ENCODE measurements at regions of chr12 and their contacts with region 1.

Region 1: DNA sequence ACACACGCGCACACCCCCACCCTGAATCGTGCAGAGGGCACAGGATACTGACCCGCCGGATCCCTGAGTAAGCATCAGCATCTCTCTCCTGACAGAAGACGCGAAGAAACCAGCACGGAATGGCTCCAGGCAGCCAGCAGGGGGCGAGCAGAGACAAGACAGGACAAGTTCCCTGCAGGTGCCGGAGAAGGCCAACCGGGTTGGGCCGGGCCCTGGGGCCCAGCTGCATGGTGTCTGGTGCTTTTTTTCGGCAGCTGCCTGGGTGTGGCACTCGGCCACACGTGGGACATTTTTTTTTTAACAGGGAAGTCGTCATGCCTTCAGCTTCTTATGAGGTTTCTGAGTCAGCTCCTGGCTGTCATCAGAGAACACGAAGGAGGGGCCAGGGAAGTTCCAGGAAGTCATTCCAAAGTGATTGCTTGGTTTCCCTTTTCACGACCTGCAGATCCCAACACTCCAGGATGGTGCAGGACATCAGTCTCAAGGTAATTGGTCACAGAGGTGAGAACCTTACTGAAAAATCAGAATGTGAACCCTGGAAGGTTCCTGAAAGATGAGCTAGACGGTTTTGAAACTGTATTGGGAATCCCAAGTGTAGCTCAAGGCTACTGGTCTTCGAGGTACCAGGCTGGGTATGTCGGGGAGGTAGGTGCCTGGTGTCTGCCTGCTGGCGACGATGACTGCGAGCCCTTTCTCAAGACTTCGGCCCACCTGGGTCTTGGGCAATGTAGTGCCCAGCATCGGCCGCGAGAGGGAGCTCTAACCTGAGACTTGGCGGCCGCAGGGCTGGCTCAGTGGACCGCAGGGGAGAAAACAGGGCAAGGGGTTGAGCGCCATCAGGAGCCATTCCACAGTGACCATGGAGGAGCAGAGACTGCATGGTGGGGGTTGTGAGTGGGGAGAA is 190.8 kb upstream of the PRMT8 start:
- DNase-seq: peak; percentile 81
- H3K4me3 ChIP-seq: peak overlapping the region; percentile 20
- H3K27ac ChIP-seq: peak overlapping the region; percentile 72
- H3K27me3 ChIP-seq: no peaks in the 10 kb centered on the region
- CTCF ChIP-seq: peak; percentile 99

Region 2: DNA sequence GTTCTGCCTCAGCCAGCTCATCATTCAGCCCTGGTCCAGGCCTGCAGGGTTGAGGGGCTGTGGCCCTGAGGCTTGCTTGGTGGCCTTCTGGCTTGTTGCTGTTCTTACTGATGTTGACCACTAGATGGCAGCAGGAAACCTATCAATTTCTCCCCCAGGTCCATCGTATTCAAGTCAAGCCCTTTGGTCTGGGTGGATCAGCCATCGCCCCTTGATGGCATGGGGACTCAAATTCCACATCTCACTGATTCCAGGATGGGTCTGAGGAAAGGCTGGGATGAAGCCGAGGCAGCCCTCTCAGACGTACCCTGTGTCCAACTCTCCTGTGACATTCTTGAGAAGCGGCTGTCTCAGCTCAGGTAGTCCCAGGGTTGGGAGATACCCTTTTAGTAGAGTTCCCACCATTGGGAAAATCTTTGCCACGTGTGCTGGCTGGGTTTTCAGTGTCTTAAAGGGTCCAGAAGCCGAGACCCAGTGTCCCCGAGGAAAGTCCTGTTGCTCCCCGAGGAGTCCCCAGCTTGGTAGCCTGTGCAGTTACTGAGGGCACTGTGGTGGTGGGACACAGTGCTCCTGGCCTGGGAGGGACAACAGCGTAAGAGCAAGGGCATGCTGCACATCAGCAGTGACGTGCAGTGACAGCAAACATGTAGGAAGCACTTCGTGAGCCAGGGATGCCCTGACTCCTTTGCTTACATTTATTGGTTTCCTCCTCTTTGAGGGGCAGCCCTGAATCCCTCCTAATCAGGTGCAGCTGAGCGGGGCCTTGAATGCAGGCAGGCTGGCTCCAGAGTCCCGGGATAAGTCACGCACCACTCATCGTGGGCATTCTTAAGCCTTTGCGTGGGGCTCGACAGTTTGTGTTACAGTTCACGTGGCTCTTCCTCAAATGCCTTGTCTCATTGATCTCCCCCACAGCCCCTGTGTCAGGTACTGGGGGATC is 164.4 kb before region 1 on chr12:
- in situ Hi-C with region 1: loop called (anchors 25 kb)
- DNase-seq: peak; percentile 61
- H3K4me3 ChIP-seq: no peak overlapping the region
- H3K27ac ChIP-seq: no peak overlapping the region
- H3K27me3 ChIP-seq: no peaks in the 10 kb centered on the region
- CTCF ChIP-seq: peak; percentile 84

Region 3: GRCh38 chr12:3803865-3804472 is 503.8 kb after region 1 on chr12:
- in situ Hi-C with region 1: loop called (anchors 25 kb)
- DNase-seq: peak; percentile 65
- H3K4me3 ChIP-seq: no peak overlapping the region
- H3K27ac ChIP-seq: no peak overlapping the region
- H3K27me3 ChIP-seq: no peaks in the 10 kb centered on the region
- CTCF ChIP-seq: peak; percentile 96

Measured in brain microvascular endothelial cell (primary cell).